Activated T-helper 1 cell treated with anti-CD3 and anti-CD28 coated beads, Interleukin-12 subunit alpha, Interleukin-12 subunit beta, Interleukin-2, Interleukin-4 antibody, amounts not matched to agents 30 ng/mL and 10 ng/mL and 1 ng/mL, durations not matched to agents 14 hours and 24 hours and 36 hours (primary cell): ENCODE measurements at regions of chr3 and their contacts with region 1.

Region 1: GRCh38 chr3:52897130-52898122 is at the start of gene STIMATE:
- DNase-seq: peak; percentile 87
- H3K4me3 Mint-ChIP-seq: peak within 1 kb of the TSS; percentile 97
- H3K27ac Mint-ChIP-seq: peak within 1 kb of the TSS; percentile 77
- H3K4me1 Mint-ChIP-seq: peaks cover 49% of the 10 kb centered on the region
- H3K27me3 Mint-ChIP-seq: no peaks in the 10 kb centered on the region
- total RNA-seq, gene STIMATE: 19.8 and 20.1 TPM in 2 replicates

Region 2: GRCh38 chr3:52770496-52771333 is 126.7 kb before region 1 on chr3 and contains the start of gene NEK4:
- intact Hi-C with region 1: loop called (anchors 2 kb)
- DNase-seq: peak; percentile 84
- H3K4me3 Mint-ChIP-seq: peak within 1 kb of the TSS; percentile 94
- H3K27ac Mint-ChIP-seq: peak within 1 kb of the TSS; percentile 96
- H3K4me1 Mint-ChIP-seq: peaks cover 22% of the 10 kb centered on the region
- H3K27me3 Mint-ChIP-seq: peaks cover 4% of the 10 kb centered on the region
- total RNA-seq, gene NEK4: 27.8 and 32.9 TPM in 2 replicates

Region 3: GRCh38 chr3:52820736-52821135 is 76.7 kb before region 1 on chr3:
- intact Hi-C with region 1: no loop called
- DNase-seq: no peak
- H3K4me3 Mint-ChIP-seq: no peak overlapping the region
- H3K27ac Mint-ChIP-seq: no peak overlapping the region
- H3K4me1 Mint-ChIP-seq: no peaks in the 10 kb centered on the region
- H3K27me3 Mint-ChIP-seq: no peaks in the 10 kb centered on the region

Region 4: GRCh38 chr3:52873433-52874159 is 23.8 kb before region 1 on chr3:
- intact Hi-C with region 1: loop called (anchors 2 kb)
- DNase-seq: no peak
- H3K4me3 Mint-ChIP-seq: no peak overlapping the region
- H3K27ac Mint-ChIP-seq: no peak overlapping the region
- H3K4me1 Mint-ChIP-seq: peaks cover 27% of the 10 kb centered on the region
- H3K27me3 Mint-ChIP-seq: no peaks in the 10 kb centered on the region

Region 5: GRCh38 chr3:52983336-52983807 is 85.9 kb after region 1 on chr3:
- intact Hi-C with region 1: loop called (anchors 2 kb)
- DNase-seq: peak; percentile 64
- H3K4me3 Mint-ChIP-seq: peak overlapping the region; percentile 38
- H3K27ac Mint-ChIP-seq: peak overlapping the region; percentile 85
- H3K4me1 Mint-ChIP-seq: peaks cover 23% of the 10 kb centered on the region
- H3K27me3 Mint-ChIP-seq: no peaks in the 10 kb centered on the region